B cell (primary cell): ENCODE measurements at regions of chr1 and their contacts with region 1.

Region 1: DNA sequence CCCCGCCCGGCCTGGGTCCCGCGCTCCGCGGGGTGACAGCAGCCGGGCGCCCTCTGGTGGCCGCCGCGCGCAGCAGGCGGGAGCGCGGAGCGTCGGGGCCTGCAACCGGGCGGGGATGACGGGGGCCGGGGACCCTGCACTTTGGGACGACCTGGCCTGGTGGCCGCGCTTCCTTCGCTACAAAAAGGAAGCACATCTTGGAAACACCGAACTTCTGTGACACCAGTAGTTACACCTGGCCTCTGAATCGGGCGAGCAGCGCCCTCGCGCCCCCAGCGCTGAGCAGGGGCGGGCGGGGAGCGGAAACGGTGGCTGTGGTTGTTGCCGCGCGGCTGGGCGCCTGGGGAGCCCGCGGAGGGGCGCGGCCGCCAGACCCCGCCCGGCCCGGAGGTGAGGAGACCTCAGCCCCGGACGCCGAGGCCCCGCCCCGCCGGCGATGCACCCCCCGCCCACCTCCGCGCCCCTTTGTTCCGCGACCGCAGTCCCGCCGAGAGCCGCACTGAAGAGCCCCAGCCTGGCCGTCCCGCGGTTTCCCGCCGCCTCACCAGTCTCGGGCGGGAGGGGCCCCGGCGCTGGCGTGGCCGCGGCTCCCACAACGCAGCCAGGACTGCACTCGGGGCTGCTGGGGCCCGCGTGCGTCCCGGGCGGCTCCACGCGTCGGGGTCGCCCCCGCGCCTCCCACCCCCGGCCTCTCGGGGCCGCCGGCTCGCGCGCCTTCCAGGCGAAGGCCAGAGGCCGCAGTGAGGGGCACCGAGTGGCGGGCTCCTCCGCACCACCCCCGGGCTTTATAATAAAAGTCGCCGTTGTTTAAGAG is 59.3 kb downstream of the H3-3A start:
- DNase-seq: peak; percentile 94
- ATAC-seq: peak; percentile 72
- H3K4me3 ChIP-seq: peak overlapping the region in 4 of 5 experiments; percentile 59 to 74 (median 62)
- H3K4me3 Mint-ChIP-seq: peak overlapping the region; percentile 90
- H3K27ac ChIP-seq: peak overlapping the region; percentile 96 to 97
- H3K27ac Mint-ChIP-seq: peak overlapping the region; percentile 99
- H3K4me1 ChIP-seq: peaks cover 68 to 75% of the 10 kb centered on the region in 2 donors
- H3K4me1 Mint-ChIP-seq: peaks cover 76% of the 10 kb centered on the region
- H3K27me3 ChIP-seq: no peaks in the 10 kb centered on the region
- H3K27me3 Mint-ChIP-seq: no peaks in the 10 kb centered on the region
- CTCF ChIP-seq: peak; percentile 79

Region 2: GRCh38 chr1:225933072-225933471 is 188.7 kb before region 1 on chr1:
- CTCF ChIA-PET with region 1: no interaction called
- POLR2A ChIA-PET with region 1: no interaction called
- intact Hi-C with region 1: no loop called
- DNase-seq: no peak
- ATAC-seq: no peak
- H3K4me3 ChIP-seq: no peak overlapping the region
- H3K4me3 Mint-ChIP-seq: no peak overlapping the region
- H3K27ac ChIP-seq: no peak overlapping the region
- H3K27ac Mint-ChIP-seq: no peak overlapping the region
- H3K4me1 ChIP-seq: no peaks in the 10 kb centered on the region
- H3K4me1 Mint-ChIP-seq: no peaks in the 10 kb centered on the region
- H3K27me3 ChIP-seq: no peaks in the 10 kb centered on the region
- H3K27me3 Mint-ChIP-seq: no peaks in the 10 kb centered on the region
- CTCF ChIP-seq: no peak

Region 3: DNA sequence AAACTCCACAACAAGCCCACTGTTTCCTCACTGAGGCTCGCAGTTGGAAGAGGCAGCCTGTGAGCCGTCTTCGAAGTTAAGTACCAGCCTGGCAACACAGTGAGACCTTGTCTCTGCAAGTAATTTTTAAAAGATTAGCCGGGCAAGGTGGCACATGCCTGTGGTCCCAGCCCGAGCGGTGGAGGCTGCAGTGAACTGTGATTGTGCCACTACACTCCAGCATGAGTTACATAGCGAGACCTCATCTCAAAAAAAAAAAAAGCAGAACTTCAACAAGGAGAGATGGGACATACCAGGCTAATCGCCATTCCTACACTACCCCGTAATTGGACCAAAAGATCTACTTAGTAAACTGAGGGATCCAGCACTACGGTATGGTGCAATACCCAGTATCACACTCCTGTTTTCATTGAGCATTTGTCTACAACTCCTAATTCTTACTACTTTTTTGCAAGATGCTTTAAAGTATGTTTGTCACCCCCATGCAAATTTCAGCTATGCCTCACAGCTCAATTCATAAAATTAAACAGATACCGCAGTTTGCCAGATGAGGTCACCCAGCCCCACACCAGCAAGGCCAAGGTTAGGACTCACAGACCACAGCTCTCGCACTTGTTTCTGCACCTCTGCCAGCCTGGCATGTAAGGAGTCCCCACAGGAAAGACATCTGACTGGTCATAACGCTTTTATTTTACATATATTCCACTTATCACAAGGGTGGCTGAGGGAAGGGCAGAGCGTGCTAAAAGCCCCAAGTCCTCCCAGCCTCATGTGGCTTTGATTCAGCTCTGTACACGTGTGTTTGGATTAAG is 143.7 kb before region 1 on chr1:
- CTCF ChIA-PET with region 1: interaction called, 16 read pairs
- POLR2A ChIA-PET with region 1: no interaction called
- intact Hi-C with region 1: loop called (anchors 1 kb)
- DNase-seq: peak; percentile 71
- ATAC-seq: peak; percentile 80
- H3K4me3 ChIP-seq: no peak overlapping the region
- H3K4me3 Mint-ChIP-seq: peak overlapping the region; percentile 67
- H3K27ac ChIP-seq: peak overlapping the region; percentile 27 to 38
- H3K27ac Mint-ChIP-seq: peak overlapping the region; percentile 83
- H3K4me1 ChIP-seq: peaks cover 16 to 23% of the 10 kb centered on the region in 2 donors
- H3K4me1 Mint-ChIP-seq: peaks cover 25% of the 10 kb centered on the region
- H3K27me3 ChIP-seq: no peaks in the 10 kb centered on the region
- H3K27me3 Mint-ChIP-seq: no peaks in the 10 kb centered on the region
- CTCF ChIP-seq: peak; percentile 5

Region 4: GRCh38 chr1:226069811-226070489 is 51.8 kb before region 1 on chr1:
- CTCF ChIA-PET with region 1: interaction called, 76 read pairs
- POLR2A ChIA-PET with region 1: interaction called, 7 read pairs
- intact Hi-C with region 1: no loop called
- DNase-seq: no peak
- ATAC-seq: no peak
- H3K4me3 ChIP-seq: no peak overlapping the region
- H3K4me3 Mint-ChIP-seq: no peak overlapping the region
- H3K27ac ChIP-seq: peak overlapping the region in 1 of 2 donors; percentile 8
- H3K27ac Mint-ChIP-seq: no peak overlapping the region
- H3K4me1 ChIP-seq: peaks cover 27 to 30% of the 10 kb centered on the region in 2 donors
- H3K4me1 Mint-ChIP-seq: peaks cover 45% of the 10 kb centered on the region
- H3K27me3 ChIP-seq: no peaks in the 10 kb centered on the region
- H3K27me3 Mint-ChIP-seq: no peaks in the 10 kb centered on the region
- CTCF ChIP-seq: no peak

Region 5: DNA sequence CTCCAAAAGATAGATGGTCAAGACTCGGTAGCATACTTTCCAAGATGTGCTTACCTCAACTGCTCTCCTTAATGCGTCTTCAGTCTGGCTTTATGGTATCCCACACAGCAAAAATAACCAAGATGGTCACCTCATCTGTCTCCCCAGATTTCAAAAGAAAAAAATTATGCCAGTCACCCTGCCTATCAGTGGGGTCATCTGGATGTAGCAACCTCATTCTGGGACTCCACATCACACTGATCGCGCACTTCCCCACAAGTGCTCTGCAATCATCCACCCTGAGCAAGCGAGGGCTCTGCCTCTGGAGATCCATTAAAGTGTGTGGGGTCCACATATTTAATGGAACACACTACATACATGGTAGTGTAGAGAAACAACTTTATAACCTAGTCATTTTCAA is 22.3 kb after region 1 on chr1:
- CTCF ChIA-PET with region 1: interaction called, 55 read pairs
- POLR2A ChIA-PET with region 1: interaction called, 4 read pairs
- intact Hi-C with region 1: loop called (anchors 2 kb)
- DNase-seq: no peak
- ATAC-seq: no peak
- H3K4me3 ChIP-seq: no peak overlapping the region
- H3K4me3 Mint-ChIP-seq: no peak overlapping the region
- H3K27ac ChIP-seq: peak overlapping the region in 1 of 2 donors; percentile 41
- H3K27ac Mint-ChIP-seq: peak overlapping the region; percentile 71
- H3K4me1 ChIP-seq: peaks cover 0 to 12% of the 10 kb centered on the region in 2 donors
- H3K4me1 Mint-ChIP-seq: peaks cover 29% of the 10 kb centered on the region
- H3K27me3 ChIP-seq: no peaks in the 10 kb centered on the region
- H3K27me3 Mint-ChIP-seq: no peaks in the 10 kb centered on the region
- CTCF ChIP-seq: no peak

Region 6: GRCh38 chr1:226176870-226177269 is 55.1 kb after region 1 on chr1:
- CTCF ChIA-PET with region 1: interaction called, 116 read pairs
- POLR2A ChIA-PET with region 1: interaction called, 11 read pairs
- intact Hi-C with region 1: no loop called
- DNase-seq: no peak
- ATAC-seq: no peak
- H3K4me3 ChIP-seq: no peak overlapping the region
- H3K4me3 Mint-ChIP-seq: no peak overlapping the region
- H3K27ac ChIP-seq: no peak overlapping the region
- H3K27ac Mint-ChIP-seq: no peak overlapping the region
- H3K4me1 ChIP-seq: peaks cover 10 to 19% of the 10 kb centered on the region in 2 donors
- H3K4me1 Mint-ChIP-seq: peaks cover 59% of the 10 kb centered on the region
- H3K27me3 ChIP-seq: no peaks in the 10 kb centered on the region
- H3K27me3 Mint-ChIP-seq: no peaks in the 10 kb centered on the region
- CTCF ChIP-seq: no peak

Region 7: GRCh38 chr1:226308723-226309315 is 187.0 kb after region 1 on chr1 and contains the start of gene LIN9:
- CTCF ChIA-PET with region 1: interaction called, 12 read pairs
- POLR2A ChIA-PET with region 1: no interaction called
- intact Hi-C with region 1: no loop called
- DNase-seq: peak; percentile 93
- ATAC-seq: peak; percentile 91
- H3K4me3 ChIP-seq: peak within 1 kb of the TSS; percentile 40 to 99 (median 96)
- H3K4me3 Mint-ChIP-seq: peak within 1 kb of the TSS; percentile 95
- H3K27ac ChIP-seq: peak within 1 kb of the TSS; percentile 25 to 81
- H3K27ac Mint-ChIP-seq: peak within 1 kb of the TSS; percentile 90
- H3K4me1 ChIP-seq: peaks cover 12 to 14% of the 10 kb centered on the region in 2 donors
- H3K4me1 Mint-ChIP-seq: peaks cover 21% of the 10 kb centered on the region
- H3K27me3 ChIP-seq: peaks cover 0 to 14% (median 2%) of the 10 kb centered on the region in 4 experiments
- H3K27me3 Mint-ChIP-seq: peaks cover 5% of the 10 kb centered on the region
- CTCF ChIP-seq: no peak
- total RNA-seq, gene LIN9: 6.4 and 6.7 TPM in 2 replicates

Region 8: DNA sequence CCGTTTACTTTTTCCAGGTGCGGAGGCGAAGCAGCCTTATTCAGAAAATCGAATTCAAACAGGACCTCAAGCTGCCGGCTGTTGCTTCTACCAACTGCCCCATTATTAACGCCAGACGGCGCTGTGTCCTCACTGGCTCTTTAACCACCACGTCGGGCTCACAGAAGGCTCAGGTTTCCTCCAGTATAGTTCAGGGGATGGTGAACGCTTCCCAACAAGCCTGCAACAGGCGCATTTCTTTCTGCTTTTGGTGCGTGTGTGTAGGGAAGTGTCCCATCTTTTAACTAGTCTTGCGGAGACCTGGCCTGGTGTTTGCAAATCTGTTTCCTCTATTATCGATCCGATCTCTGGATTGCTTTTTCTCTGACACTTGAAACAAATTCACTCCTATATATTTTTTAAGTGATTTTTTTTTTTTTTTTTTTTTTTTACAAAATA is 426.0 kb after region 1 on chr1:
- CTCF ChIA-PET with region 1: interaction called, 5 read pairs
- POLR2A ChIA-PET with region 1: no interaction called
- intact Hi-C with region 1: loop called (anchors 5 kb)
- DNase-seq: peak; percentile 83
- ATAC-seq: peak; percentile 80
- H3K4me3 ChIP-seq: peak overlapping the region in 3 of 5 experiments; percentile 34 to 51 (median 35)
- H3K4me3 Mint-ChIP-seq: peak overlapping the region; percentile 59
- H3K27ac ChIP-seq: no peak overlapping the region
- H3K27ac Mint-ChIP-seq: no peak overlapping the region
- H3K4me1 ChIP-seq: peaks cover 22 to 24% of the 10 kb centered on the region in 2 donors
- H3K4me1 Mint-ChIP-seq: peaks cover 21% of the 10 kb centered on the region
- H3K27me3 ChIP-seq: peaks cover 0 to 33% (median 4%) of the 10 kb centered on the region in 4 experiments
- H3K27me3 Mint-ChIP-seq: peaks cover 17% of the 10 kb centered on the region
- CTCF ChIP-seq: peak; percentile 88